ENCODE measurements at regions of chr1 and their contacts with region 1.

Region 1: GRCh38 chr1:15430787-15431570 is 7.3 kb upstream of the CTRC start:
- DNase-seq: peak; percentile 59
- H3K4me3 Mint-ChIP-seq: no peak overlapping the region
- H3K27ac Mint-ChIP-seq: no peak overlapping the region
- H3K4me1 Mint-ChIP-seq: peaks cover 14% of the 10 kb centered on the region
- H3K27me3 Mint-ChIP-seq: no peaks in the 10 kb centered on the region
- CTCF ChIP-seq: peak; percentile 98

Region 2: DNA sequence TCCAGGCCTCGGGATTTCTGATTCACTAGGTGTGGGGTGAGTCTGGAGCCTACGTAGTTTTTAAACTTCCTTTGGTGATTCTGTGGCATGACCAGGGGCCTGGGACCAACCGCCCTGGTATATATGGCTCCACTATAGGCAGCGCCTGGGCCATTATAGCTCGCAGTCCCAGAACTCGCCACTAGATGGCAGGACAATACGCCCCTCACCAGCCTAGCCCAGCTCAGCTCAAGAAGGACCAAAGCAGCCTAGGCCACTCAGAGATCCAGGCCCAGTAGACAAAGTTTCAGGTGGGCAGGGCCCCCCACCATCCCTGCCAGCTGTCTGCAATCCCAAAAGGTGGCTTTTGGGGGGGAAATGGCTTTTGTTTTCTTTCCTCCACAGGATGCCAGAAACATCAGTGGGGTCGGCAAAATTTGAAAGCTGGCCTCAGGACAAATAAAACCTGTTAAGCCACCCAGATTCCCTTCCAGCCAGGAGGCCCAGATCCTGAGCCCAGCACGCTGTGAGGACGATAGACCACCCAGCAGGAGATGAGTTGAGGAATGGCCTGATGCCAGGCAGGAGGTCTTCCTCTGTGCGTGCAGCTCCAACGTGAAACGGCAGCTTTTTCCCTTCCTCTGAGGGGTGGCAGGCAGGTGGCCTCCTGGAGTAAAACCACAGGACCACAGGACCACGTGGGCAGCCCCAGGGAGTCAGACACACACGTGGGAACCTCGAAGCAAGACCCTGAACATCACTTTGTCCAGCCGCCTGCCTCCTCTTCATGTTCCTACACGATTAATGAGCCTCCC is 302.3 kb before region 1 on chr1:
- CTCF ChIA-PET with region 1: interaction called, 5 read pairs
- POLR2A ChIA-PET with region 1: interaction called, 3 read pairs
- intact Hi-C with region 1: loop called (anchors 1 kb)
- DNase-seq: peak; percentile 74
- H3K4me3 Mint-ChIP-seq: no peak overlapping the region
- H3K27ac Mint-ChIP-seq: no peak overlapping the region
- H3K4me1 Mint-ChIP-seq: no peaks in the 10 kb centered on the region
- H3K27me3 Mint-ChIP-seq: peaks cover 1% of the 10 kb centered on the region
- CTCF ChIP-seq: peak; percentile 86

Region 3: GRCh38 chr1:15272009-15272788 is 158.8 kb before region 1 on chr1:
- CTCF ChIA-PET with region 1: interaction called, 3 read pairs
- POLR2A ChIA-PET with region 1: no interaction called
- intact Hi-C with region 1: loop called (anchors 5 kb)
- DNase-seq: peak; percentile 89
- H3K4me3 Mint-ChIP-seq: no peak overlapping the region
- H3K27ac Mint-ChIP-seq: no peak overlapping the region
- H3K4me1 Mint-ChIP-seq: peaks cover 7% of the 10 kb centered on the region
- H3K27me3 Mint-ChIP-seq: peaks cover 12% of the 10 kb centered on the region
- CTCF ChIP-seq: peak; percentile 75

Region 4: DNA sequence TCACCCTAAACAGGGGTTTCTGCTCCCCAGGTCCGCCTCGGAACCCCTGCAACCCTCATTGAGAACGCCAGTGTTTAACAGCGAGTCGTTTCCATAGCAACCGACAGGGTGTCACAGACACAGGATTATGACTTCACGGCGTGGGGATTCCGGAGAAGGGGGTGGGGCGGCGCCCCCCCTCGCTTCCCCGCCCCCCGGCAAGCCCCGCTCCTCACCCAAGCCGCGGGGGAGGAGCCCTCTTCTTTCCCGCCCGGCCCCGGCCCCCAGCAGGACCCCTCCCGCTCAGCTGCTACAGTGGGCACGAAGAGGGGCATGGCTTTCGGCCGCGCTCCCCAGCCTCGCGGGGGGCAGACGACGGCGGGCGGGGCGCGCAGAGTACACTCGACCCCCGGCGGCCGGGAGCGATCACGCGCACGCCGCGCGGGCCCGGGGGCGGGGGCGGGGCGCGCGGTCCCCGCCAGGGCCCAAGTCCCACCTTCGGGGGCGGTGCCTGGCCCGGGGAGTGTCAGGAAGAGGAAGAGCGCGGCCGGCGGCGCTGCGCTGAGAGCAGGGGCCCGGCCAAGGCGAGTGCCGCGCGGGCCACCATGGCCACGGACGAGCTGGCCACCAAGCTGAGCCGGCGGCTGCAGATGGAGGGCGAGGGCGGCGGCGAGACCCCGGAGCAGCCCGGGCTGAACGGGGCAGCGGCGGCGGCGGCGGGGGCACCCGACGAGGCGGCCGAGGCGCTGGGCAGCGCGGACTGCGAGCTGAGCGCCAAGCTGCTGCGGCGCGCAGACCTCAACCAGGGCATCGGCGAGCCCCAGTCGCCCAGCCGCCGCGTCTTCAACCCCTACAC is 21.4 kb before region 1 on chr1 and contains the start of gene EFHD2:
- CTCF ChIA-PET with region 1: interaction called, 11 read pairs
- POLR2A ChIA-PET with region 1: interaction called, 3 read pairs
- intact Hi-C with region 1: no loop called
- DNase-seq: peak; percentile 76
- H3K4me3 Mint-ChIP-seq: peak within 1 kb of the TSS; percentile 88
- H3K27ac Mint-ChIP-seq: peak within 1 kb of the TSS; percentile 96
- H3K4me1 Mint-ChIP-seq: peaks cover 35% of the 10 kb centered on the region
- H3K27me3 Mint-ChIP-seq: no peaks in the 10 kb centered on the region
- CTCF ChIP-seq: no peak
- total RNA-seq, gene EFHD2: 45.1 and 48.5 TPM in 2 replicates

Region 5: GRCh38 chr1:15501208-15502032 is 70.4 kb after region 1 on chr1:
- CTCF ChIA-PET with region 1: interaction called, 3 read pairs
- POLR2A ChIA-PET with region 1: no interaction called
- intact Hi-C with region 1: loop called (anchors 10 kb)
- DNase-seq: peak; percentile 65
- H3K4me3 Mint-ChIP-seq: no peak overlapping the region
- H3K27ac Mint-ChIP-seq: no peak overlapping the region
- H3K4me1 Mint-ChIP-seq: no peaks in the 10 kb centered on the region
- H3K27me3 Mint-ChIP-seq: no peaks in the 10 kb centered on the region
- CTCF ChIP-seq: peak; percentile 53

Region 6: GRCh38 chr1:15540186-15540585 is 109.2 kb after region 1 on chr1:
- CTCF ChIA-PET with region 1: no interaction called
- POLR2A ChIA-PET with region 1: no interaction called
- intact Hi-C with region 1: no loop called
- DNase-seq: no peak
- H3K4me3 Mint-ChIP-seq: no peak overlapping the region
- H3K27ac Mint-ChIP-seq: no peak overlapping the region
- H3K4me1 Mint-ChIP-seq: no peaks in the 10 kb centered on the region
- H3K27me3 Mint-ChIP-seq: no peaks in the 10 kb centered on the region
- CTCF ChIP-seq: no peak

Measured in MCF 10A (cell line).